Heart right ventricle (tissue), 16 donors: ENCODE measurements at regions of chr7 and their contacts with region 1.

Region 1: DNA sequence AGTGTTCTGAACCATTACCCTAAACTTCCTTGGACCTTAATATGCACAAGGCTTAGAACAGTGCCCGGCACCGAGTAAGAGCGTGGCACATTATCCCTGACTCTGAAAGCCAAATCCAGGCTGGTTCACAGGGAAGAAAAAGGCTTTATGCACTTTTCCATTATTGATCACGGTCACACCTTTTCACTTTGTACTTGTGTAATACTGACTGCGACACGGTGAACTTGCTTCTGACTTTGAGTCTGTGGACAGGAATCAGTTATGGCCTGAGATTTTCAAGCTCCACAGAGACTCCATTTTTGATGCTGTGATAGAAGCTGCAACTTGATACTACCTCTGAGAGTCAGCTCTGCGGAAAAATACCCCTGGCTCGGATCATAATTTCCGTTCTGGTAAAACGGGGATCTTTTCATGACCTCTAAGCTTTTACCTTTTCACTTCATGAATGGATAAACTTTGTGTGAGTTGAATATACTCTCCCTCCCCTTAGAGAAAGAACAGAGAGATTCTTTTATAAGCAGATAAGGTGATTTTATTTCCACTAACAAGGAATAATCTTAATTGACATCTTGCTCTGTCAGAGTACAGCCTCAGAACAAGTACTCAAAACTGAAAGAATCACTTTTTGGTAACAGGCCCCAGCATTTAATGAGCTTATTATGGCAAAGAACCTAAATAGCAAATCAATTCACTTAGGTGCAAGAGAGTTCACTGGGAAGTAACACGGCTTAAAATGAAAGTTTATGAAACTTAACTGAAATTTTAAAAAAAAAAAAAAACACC is 88.8 kb downstream of the ELMO1 start:
- DNase-seq: no peak
- ATAC-seq: no peak
- H3K4me3 ChIP-seq: no peak overlapping the region
- H3K27ac ChIP-seq: peak overlapping the region in 1 of 10 donors; percentile 32
- H3K4me1 ChIP-seq: peaks cover 3 to 69% (median 37%) of the 10 kb centered on the region in 9 donors
- H3K27me3 ChIP-seq: no peaks in the 10 kb centered on the region
- CTCF ChIP-seq: no peak

Region 2: DNA sequence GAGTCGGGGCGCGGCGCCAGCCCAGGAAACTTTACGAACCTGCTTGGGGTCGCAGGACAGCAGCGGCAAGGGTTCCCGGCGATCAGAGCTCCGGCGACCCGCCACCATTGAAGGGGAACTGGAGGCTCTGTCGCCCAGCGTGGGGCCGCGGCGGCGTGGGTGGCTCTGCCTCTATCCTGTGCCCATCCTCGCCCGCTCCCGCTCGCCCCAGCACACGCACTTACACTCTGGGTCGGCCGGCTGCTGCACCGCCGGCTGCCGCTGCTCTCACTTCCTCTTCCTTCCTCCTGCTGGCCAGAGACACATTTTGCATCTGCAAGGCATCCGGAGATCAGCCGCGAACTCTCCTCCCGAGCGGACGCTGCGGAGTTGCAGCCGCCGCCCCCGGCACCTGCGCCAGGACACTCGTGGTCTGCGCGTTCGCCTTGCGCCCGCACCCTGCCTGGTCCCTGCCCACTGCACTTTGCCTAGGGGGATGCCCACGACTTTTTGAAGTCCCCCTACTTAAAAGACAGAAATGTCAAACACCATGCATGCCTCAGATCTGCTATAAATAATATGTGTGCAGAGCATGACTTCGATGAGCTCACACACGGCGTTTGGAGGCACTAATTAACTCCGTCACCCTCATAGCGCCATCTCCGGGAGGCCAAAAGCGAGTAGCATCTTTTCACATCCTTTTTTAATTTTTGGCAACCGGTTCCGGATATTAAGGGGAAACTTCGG is 88.9 kb after region 1 on chr7 and contains the start of gene ELMO1:
- intact Hi-C with region 1: loop called in 4 of 10 experiments (anchors 2 to 10 kb)
- DNase-seq: peak; percentile 76 to 79
- ATAC-seq: peak; percentile 77 to 89 (median 85)
- H3K4me3 ChIP-seq: peak within 1 kb of the TSS; percentile 59 to 86 (median 78)
- H3K27ac ChIP-seq: peak within 1 kb of the TSS; percentile 82 to 98 (median 94)
- H3K4me1 ChIP-seq: peaks cover 0 to 47% (median 20%) of the 10 kb centered on the region in 9 donors
- H3K27me3 ChIP-seq: peaks cover 0 to 22% (median 0%) of the 10 kb centered on the region in 7 donors
- CTCF ChIP-seq: peak in 8 of 9 donors; percentile 20 to 63 (median 51)
- total RNA-seq, gene ELMO1: 8.8 to 18.0 (median 14.0) TPM

Region 3: GRCh38 chr7:37462138-37462537 is 102.3 kb after region 1 on chr7:
- intact Hi-C with region 1: no loop called
- DNase-seq: no peak
- ATAC-seq: no peak
- H3K4me3 ChIP-seq: no peak overlapping the region
- H3K27ac ChIP-seq: no peak overlapping the region
- H3K4me1 ChIP-seq: no peaks in the 10 kb centered on the region
- H3K27me3 ChIP-seq: peaks cover 0 to 6% (median 0%) of the 10 kb centered on the region in 7 donors
- CTCF ChIP-seq: no peak